PC-9 (cell line): ENCODE measurements at regions of chr3 and their contacts with region 1.

Region 1: GRCh38 chr3:48556793-48557626 is at the start of gene PFKFB4:
- DNase-seq: peak; percentile 91 to 99
- H3K4me3 ChIP-seq: peak within 1 kb of the TSS; percentile 66
- H3K27ac ChIP-seq: no peak within 1 kb of the TSS
- H3K4me1 ChIP-seq: peaks cover 21% of the 10 kb centered on the region
- H3K27me3 ChIP-seq: no peaks in the 10 kb centered on the region
- CTCF ChIP-seq: no peak; the same call in 1 of the 2 replicates
- total RNA-seq, gene PFKFB4: 11.7 and 13.3 TPM in 2 replicates

Region 2: DNA sequence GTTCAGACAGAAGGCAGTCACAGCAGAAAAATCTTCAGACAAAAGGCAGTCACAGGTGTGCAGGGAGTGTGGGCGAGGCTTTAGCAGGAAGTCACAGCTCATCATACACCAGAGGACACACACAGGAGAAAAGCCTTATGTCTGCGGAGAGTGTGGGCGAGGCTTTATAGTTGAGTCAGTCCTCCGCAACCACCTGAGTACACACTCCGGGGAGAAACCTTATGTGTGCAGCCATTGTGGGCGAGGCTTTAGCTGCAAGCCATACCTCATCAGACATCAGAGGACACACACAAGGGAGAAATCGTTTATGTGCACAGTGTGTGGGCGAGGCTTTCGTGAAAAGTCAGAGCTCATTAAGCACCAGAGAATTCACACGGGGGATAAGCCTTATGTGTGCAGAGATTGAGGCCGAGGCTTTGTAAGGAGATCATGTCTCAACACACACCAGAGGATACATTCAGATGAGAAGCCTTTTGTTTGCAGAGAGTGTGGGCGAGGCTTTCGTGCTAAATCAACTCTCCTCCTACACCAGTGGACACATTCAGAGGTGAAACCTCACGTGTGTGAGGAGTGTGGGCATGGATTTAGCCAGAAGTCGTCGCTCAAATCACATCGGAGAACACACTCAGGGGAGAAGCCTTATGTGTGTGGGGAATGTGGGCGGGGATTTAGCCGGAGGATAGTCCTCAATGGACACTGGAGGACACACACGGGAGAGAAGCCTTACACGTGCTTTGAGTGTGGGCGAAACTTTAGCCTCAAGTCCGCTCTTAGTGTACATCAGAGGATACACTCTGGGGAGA is 288.4 kb before region 1 on chr3:
- CTCF ChIA-PET with region 1: interaction called, 4 read pairs
- POLR2A ChIA-PET with region 1: no interaction called
- intact Hi-C with region 1: loop called (anchors 5 kb)
- DNase-seq: peak; percentile 70 to 79
- H3K4me3 ChIP-seq: no peak overlapping the region
- H3K27ac ChIP-seq: no peak overlapping the region
- H3K4me1 ChIP-seq: no peaks in the 10 kb centered on the region
- H3K27me3 ChIP-seq: no peaks in the 10 kb centered on the region
- CTCF ChIP-seq: no peak

Region 3: DNA sequence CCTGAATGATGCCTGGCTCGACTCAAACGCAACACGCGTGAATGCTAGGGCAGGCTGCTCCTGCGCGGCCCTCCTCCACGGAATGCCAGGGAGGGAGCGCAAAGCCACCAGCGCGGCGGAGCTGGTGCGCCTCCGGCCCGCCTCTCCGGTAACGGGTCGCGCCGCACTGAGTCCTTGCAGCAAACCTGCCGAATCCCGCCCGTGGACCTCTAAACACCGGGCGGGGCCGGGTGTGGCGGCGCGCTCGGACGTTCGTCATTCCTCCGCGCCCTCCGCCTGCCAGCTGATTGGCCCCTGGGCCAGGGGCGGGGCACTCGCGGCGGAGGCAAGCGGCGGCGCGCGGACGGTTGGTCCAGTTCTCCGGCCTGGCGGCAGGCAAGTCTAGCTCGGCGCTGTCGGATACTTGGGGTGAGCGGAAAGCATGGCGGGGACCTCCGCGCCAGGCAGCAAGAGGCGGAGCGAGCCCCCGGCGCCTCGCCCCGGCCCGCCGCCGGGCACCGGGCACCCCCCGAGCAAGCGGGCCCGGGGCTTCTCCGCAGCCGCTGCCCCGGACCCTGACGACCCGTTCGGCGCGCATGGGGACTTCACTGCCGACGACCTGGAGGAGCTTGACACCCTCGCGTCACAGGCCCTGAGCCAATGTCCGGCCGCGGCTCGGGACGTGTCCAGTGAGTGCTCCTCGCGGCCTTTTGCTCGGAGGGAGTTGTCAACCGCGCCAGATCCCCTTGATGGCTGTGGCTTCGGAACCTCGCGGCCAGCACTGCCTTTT is 110.4 kb before region 1 on chr3 and contains the start of gene ATRIP:
- CTCF ChIA-PET with region 1: no interaction called
- POLR2A ChIA-PET with region 1: no interaction called
- intact Hi-C with region 1: loop called (anchors 5 kb)
- DNase-seq: peak; percentile 75 to 91
- H3K4me3 ChIP-seq: peak within 1 kb of the TSS; percentile 92
- H3K27ac ChIP-seq: peak within 1 kb of the TSS; percentile 10; the same call in 1 of the 2 replicates
- H3K4me1 ChIP-seq: peaks cover 17% of the 10 kb centered on the region
- H3K27me3 ChIP-seq: no peaks in the 10 kb centered on the region
- CTCF ChIP-seq: no peak
- total RNA-seq, gene ATRIP: 6.9 and 8.5 TPM in 2 replicates

Region 4: DNA sequence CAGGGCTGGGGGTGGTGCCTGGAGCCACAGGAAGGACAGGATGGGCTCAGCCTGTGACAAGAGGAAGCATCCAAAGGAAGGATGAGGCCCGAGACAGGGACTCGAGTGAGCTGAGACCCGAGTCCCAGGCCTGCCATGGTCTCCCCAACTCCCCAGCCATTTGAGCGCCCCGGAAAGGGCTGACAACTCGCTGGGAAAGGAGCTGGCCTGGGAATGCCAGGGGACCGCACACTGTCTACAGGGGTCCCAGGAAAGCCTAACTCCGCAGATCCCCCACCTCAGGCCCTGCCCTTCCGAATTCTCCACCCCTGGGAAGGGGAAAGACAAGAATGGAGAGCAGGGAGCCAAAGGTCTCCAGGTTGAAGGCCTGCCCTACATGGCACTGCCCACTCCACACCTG is 32.0 kb before region 1 on chr3:
- CTCF ChIA-PET with region 1: no interaction called
- POLR2A ChIA-PET with region 1: no interaction called
- intact Hi-C with region 1: no loop called
- DNase-seq: no peak
- H3K4me3 ChIP-seq: no peak overlapping the region
- H3K27ac ChIP-seq: no peak overlapping the region
- H3K4me1 ChIP-seq: no peaks in the 10 kb centered on the region
- H3K27me3 ChIP-seq: no peaks in the 10 kb centered on the region
- CTCF ChIP-seq: no peak

Region 5: GRCh38 chr3:48595526-48596121 is 38.6 kb after region 1 on chr3:
- CTCF ChIA-PET with region 1: no interaction called
- POLR2A ChIA-PET with region 1: no interaction called
- intact Hi-C with region 1: loop called (anchors 2 kb)
- DNase-seq: peak; percentile 86 to 98
- H3K4me3 ChIP-seq: peak overlapping the region; percentile 62; the same call in 1 of the 2 replicates
- H3K27ac ChIP-seq: peak overlapping the region; percentile 14
- H3K4me1 ChIP-seq: peaks cover 53% of the 10 kb centered on the region
- H3K27me3 ChIP-seq: no peaks in the 10 kb centered on the region
- CTCF ChIP-seq: no peak

Region 6: GRCh38 chr3:48663415-48664312 is 106.7 kb after region 1 on chr3:
- CTCF ChIA-PET with region 1: interaction called, 3 read pairs
- POLR2A ChIA-PET with region 1: no interaction called
- intact Hi-C with region 1: loop called (anchors 1 kb)
- DNase-seq: peak; percentile 93 to 98
- H3K4me3 ChIP-seq: peak overlapping the region; percentile 76
- H3K27ac ChIP-seq: peak overlapping the region; percentile 93
- H3K4me1 ChIP-seq: 0 out of 2 replicates have a peak, but pooled peaks cover 4% of the 10 kb centered on the region
- H3K27me3 ChIP-seq: no peaks in the 10 kb centered on the region
- CTCF ChIP-seq: peak; percentile 78

Region 7: GRCh38 chr3:48716982-48717746 is 160.2 kb after region 1 on chr3 and contains the start of gene IP6K2:
- CTCF ChIA-PET with region 1: no interaction called
- POLR2A ChIA-PET with region 1: interaction called, 13 read pairs
- intact Hi-C with region 1: no loop called
- DNase-seq: peak; percentile 92 to 99
- H3K4me3 ChIP-seq: peak within 1 kb of the TSS; percentile 99
- H3K27ac ChIP-seq: peak within 1 kb of the TSS; percentile 53
- H3K4me1 ChIP-seq: peaks cover 17% of the 10 kb centered on the region
- H3K27me3 ChIP-seq: no peaks in the 10 kb centered on the region
- CTCF ChIP-seq: no peak
- total RNA-seq, gene IP6K2: 123 and 144 TPM in 2 replicates